Endothelial cell of umbilical vein (primary cell): ENCODE measurements at regions of chr9 and their contacts with region 1.

Region 1: DNA sequence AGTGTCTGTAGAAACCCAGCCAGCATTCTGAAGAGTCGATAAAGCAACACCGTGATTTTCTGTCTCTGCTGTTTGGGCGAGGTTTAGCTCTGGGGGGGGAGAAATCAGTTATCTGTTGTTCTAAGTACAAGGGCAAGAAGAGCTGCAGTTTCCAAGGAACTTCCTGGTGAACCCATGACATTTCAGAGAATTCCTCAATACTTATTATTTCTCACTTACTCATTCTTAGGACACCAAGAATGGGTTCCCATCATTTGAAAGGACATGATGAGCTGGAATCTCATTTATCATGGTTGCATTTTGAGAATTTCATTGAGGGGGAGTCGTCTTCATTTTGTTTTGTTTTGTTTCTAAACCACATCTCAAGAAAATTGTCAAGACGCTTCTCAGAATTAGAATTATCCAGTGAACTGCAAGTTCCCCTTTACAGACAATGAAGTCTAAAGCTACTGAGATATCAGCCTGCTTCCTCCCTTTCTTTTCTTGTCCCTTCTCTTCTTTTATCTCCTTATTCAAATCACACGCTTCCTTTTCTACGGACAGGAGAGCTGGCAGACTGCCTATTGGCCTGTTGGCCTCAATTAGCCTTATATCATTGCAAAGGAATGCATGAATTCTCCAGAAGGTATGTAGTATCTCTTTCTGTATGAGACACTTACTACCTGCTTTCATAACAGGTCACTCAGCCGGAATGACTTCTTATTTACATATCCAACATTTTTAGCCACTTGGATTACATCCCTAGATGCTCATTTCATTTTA is 53.7 kb downstream of the ZNF462 start:
- DNase-seq: peak; percentile 89
- H3K4me3 ChIP-seq: peak overlapping the region in 1 of 3 experiments; percentile 19
- H3K27ac ChIP-seq: peak overlapping the region; percentile 92
- H3K4me1 ChIP-seq: peaks cover 33% of the 10 kb centered on the region
- H3K27me3 ChIP-seq: no peaks in the 10 kb centered on the region
- CTCF ChIP-seq: no peak
- POLR2A ChIP-seq: peak; percentile 29

Region 2: GRCh38 chr9:106799146-106799545 is 117.5 kb before region 1 on chr9:
- CTCF ChIA-PET with region 1: no interaction called
- POLR2A ChIA-PET with region 1: no interaction called
- dilution Hi-C with region 1: no loop called
- intact Hi-C with region 1: loop called (anchors 1 kb)
- DNase-seq: peak; percentile 81
- H3K4me3 ChIP-seq: no peak overlapping the region
- H3K27ac ChIP-seq: peak overlapping the region; percentile 88
- H3K4me1 ChIP-seq: peaks cover 18% of the 10 kb centered on the region
- H3K27me3 ChIP-seq: no peaks in the 10 kb centered on the region
- CTCF ChIP-seq: no peak
- POLR2A ChIP-seq: no peak

Region 3: DNA sequence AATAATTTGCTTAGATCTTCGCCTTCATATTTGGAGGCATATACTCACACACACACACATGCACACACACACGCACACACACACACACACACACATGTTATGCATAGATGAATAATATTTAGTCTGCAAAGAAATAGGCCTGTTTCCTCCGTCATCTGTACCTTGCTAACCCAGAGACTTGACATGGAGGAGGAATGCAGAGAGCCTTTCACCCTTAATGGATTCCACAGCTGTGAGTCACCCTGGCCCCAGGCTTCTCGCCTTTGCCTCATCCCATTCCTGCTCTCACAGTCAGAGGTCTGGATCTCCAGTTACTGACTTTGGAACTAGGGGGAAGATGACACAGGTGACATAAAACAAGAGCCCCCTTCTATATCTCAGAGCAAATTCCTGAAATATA is 24.0 kb before region 1 on chr9:
- CTCF ChIA-PET with region 1: interaction called, 5 read pairs
- POLR2A ChIA-PET with region 1: no interaction called
- dilution Hi-C with region 1: no loop called
- intact Hi-C with region 1: loop called (anchors 1 kb)
- DNase-seq: peak; percentile 89
- H3K4me3 ChIP-seq: no peak overlapping the region
- H3K27ac ChIP-seq: peak overlapping the region; percentile 93
- H3K4me1 ChIP-seq: peaks cover 20% of the 10 kb centered on the region
- H3K27me3 ChIP-seq: no peaks in the 10 kb centered on the region
- CTCF ChIP-seq: no peak
- POLR2A ChIP-seq: no peak

Region 4: DNA sequence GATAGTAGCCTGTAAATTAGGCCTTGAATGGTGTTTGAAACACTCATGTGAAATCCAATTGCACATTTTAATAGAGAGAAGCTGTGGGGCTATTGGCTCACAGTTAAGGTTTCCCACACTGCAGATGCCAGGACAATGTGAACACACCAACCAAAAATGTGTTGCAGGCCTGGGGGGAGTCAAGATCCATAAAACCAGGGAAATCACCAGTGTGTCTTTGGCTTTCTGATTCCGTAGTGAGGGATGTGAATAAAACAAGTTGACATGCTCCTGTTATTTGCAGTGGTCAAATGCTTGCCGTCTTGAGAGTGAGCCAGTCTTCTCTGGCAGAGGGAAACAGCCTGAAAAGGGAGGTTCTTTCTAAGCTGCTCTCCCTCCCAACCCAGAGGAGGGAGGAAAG is 25.3 kb after region 1 on chr9:
- CTCF ChIA-PET with region 1: no interaction called
- POLR2A ChIA-PET with region 1: no interaction called
- dilution Hi-C with region 1: no loop called
- intact Hi-C with region 1: no loop called
- DNase-seq: no peak
- H3K4me3 ChIP-seq: no peak overlapping the region
- H3K27ac ChIP-seq: no peak overlapping the region
- H3K4me1 ChIP-seq: peaks cover 8% of the 10 kb centered on the region
- H3K27me3 ChIP-seq: no peaks in the 10 kb centered on the region
- CTCF ChIP-seq: no peak
- POLR2A ChIP-seq: no peak

Region 5: DNA sequence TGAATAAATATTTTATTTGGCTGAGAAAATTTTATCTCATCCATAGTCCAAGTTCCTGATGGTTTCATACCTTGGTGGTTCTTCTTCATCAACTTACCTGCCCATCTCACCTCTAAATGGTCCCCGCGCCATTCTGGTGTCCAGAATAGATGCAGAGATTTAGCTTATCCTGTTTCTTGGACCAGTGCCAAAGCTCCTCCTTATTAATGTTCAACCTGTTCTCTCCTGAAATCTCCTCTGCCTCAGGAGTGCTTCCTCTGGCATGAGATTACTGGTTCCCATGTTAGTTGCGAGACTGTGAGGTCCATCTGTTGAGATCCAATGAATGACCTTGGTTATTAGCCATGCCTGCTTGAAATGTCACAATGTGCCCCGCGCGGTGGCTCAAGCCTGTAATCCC is 186.0 kb after region 1 on chr9:
- CTCF ChIA-PET with region 1: no interaction called
- POLR2A ChIA-PET with region 1: no interaction called
- dilution Hi-C with region 1: no loop called
- intact Hi-C with region 1: no loop called
- DNase-seq: no peak
- H3K4me3 ChIP-seq: no peak overlapping the region
- H3K27ac ChIP-seq: no peak overlapping the region
- H3K4me1 ChIP-seq: no peaks in the 10 kb centered on the region
- H3K27me3 ChIP-seq: no peaks in the 10 kb centered on the region
- CTCF ChIP-seq: no peak
- POLR2A ChIP-seq: no peak